ENCODE measurements at regions of chr2 and their contacts with region 1.

Region 1: DNA sequence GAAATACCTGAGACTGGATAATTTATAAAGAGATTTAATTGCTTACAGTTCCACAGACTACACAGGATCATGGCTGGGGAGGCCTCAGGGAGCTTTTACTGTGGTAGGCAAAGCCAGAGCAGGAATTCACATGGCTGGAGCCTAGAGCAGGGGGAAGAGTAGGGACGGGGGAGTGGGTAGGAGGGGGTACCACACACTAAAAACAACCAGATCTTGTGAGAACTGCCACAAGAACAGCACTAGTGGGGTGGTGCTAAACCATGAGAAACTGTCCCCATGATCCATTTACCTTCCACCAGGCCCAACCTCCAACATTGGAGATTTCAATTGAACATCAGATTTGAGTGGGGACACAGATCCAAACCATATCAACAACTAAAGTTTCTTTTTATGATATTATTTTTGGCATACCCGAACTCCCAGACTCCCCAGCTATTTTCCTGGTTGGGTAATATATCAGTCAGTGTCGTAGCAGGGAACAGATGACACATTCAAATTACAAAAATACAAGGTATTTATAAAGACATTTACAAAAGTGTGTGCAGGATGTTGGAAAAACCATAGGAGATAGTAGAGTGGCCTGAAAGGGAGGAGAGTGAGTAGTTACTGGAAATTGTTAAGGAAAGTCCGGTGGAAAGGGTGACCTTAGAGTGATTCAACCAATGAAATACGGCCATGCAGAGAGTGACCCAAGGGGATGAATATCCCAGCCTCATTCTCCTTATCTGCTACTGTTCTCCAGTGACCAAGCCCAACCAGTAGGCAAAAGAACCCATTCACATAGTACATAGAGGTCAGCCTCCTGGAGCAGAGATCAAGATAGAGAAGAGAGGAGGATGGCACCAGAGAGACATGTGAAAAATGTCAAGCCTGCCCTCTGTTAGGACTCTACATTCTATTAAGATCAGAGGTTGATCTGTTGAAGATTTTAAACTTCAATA is 8.8 kb downstream of the RPL37A start:
- DNase-seq: no peak
- H3K4me3 Mint-ChIP-seq: no peak overlapping the region
- H3K27ac Mint-ChIP-seq: no peak overlapping the region
- H3K4me1 Mint-ChIP-seq: peaks cover 18% of the 10 kb centered on the region
- H3K27me3 Mint-ChIP-seq: no peaks in the 10 kb centered on the region

Region 2: GRCh38 chr2:216519154-216519762 is 11.8 kb after region 1 on chr2:
- CTCF ChIA-PET with region 1: interaction called, 10 read pairs
- POLR2A ChIA-PET with region 1: interaction called, 4 read pairs
- intact Hi-C with region 1: no loop called
- DNase-seq: peak; percentile 42
- H3K4me3 Mint-ChIP-seq: no peak overlapping the region
- H3K27ac Mint-ChIP-seq: no peak overlapping the region
- H3K4me1 Mint-ChIP-seq: no peaks in the 10 kb centered on the region
- H3K27me3 Mint-ChIP-seq: no peaks in the 10 kb centered on the region